HCT116 (cell line): ENCODE measurements at regions of chr13 and their contacts with region 1.

Region 1: DNA sequence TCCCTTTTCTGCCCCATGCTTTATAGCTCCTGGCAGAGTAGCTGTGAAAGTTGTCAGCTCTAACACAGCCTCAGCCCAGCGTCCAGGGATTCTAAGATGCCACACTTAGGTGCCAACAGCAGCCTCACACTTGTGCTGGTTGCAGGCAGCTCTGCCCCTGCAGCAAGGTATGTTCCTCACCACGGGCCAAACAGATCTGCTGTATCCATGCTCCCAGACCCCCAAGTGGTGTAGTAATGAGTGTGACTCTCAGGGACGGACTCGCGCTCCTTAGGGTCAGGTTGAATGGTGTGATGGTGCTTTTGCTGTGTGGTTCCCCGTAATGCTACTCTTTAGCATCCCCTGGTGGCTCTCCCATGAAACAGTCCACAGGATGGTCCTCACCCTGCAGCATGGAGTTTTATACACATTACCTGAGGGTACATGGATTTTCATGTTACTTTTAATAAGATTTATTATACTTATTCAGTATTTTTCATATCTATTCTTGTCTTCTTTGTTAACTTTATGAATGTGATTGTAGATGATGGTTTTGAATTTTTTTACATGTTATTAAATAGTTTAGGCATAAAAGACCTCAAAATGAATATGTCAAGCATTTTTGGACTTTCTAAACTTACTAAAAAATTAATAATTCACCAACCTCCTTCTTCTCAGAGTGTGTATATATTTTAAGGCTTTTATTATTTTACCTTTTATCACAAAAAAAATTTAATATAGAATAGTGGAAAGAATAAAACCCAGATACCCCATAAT is 232.5 kb downstream of the SLC7A1 start:
- DNase-seq: peak; percentile 28
- ATAC-seq: peak; percentile 100
- H3K4me3 ChIP-seq: no peak overlapping the region
- H3K27ac ChIP-seq: no peak overlapping the region
- H3K4me1 ChIP-seq: no peaks in the 10 kb centered on the region
- H3K27me3 ChIP-seq: peaks cover 13% of the 10 kb centered on the region
- CTCF ChIP-seq: peak; percentile 39 to 95 (median 81); a peak in 5 of 6 replicates
- POLR2A ChIP-seq: no peak
- RAD21 ChIP-seq: peak; percentile 59

Region 2: DNA sequence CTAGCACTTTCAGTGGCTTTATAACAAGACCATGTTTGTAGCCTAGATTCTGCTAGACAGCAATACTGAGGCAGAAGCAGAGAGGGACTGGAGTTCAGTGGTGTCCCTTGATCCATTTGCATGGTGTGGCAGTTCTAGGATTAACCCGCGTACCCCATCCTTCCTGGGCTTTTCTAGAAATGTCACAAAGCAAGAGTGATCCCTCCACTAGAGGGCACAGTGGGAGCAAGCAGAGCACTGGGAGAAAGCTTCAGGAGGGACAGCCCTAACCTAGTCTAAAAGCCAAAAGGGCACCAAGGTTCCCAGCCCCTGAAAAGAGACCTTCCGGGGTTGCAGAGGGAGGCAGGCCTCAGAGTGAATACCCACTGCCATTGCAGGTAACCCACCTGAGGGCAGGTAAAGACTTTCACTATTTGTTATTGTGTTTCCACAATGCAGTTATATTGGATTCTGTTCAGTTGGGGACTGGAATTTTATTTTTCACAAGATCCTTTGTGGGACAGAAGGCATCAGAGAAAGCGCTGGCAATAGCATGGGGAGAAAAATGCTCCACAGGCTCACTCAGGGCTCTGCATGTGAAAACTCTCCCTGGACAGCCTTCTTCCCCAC is 1038.7 kb before region 1 on chr13:
- CTCF ChIA-PET with region 1: no interaction called
- POLR2A ChIA-PET with region 1: no interaction called
- RAD21 ChIA-PET with region 1: no interaction called
- intact Hi-C with region 1: loop called (anchors 10 kb)
- DNase-seq: peak; percentile 60
- ATAC-seq: peak; percentile 95
- H3K4me3 ChIP-seq: no peak overlapping the region
- H3K27ac ChIP-seq: no peak overlapping the region
- H3K4me1 ChIP-seq: no peaks in the 10 kb centered on the region
- H3K27me3 ChIP-seq: no peaks in the 10 kb centered on the region
- CTCF ChIP-seq: peak; percentile 57 to 86 (median 81); a peak in 5 of 6 replicates
- POLR2A ChIP-seq: no peak
- RAD21 ChIP-seq: peak; percentile 79

Region 3: DNA sequence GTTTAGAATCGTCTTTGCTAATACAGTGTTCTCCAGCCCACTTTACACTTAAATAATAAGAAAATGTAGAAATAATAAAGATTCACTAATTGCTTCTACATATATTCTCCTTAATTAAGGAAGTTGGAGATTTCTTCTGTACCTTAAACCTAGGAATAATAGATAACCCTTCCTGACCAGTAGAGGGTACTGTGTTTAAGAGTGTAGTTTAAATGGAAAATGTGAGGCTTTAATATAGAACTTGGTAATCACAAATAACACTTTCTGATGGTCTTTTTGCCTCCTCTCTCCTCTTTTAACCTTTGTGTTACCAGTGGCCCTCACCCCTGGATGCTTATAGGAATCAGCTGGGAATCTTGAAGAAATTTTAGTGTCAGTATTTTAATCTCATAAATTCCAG is 683.4 kb before region 1 on chr13:
- CTCF ChIA-PET with region 1: no interaction called
- POLR2A ChIA-PET with region 1: no interaction called
- RAD21 ChIA-PET with region 1: no interaction called
- intact Hi-C with region 1: loop called (anchors 10 kb)
- DNase-seq: no peak
- ATAC-seq: peak; percentile 56; the same call in 1 of the 2 replicates
- H3K4me3 ChIP-seq: no peak overlapping the region
- H3K27ac ChIP-seq: no peak overlapping the region
- H3K4me1 ChIP-seq: peaks cover 0 to 5% of the 10 kb centered on the region in 2 experiments; a peak in 1 of 4 replicates
- H3K27me3 ChIP-seq: no peaks in the 10 kb centered on the region
- CTCF ChIP-seq: peak; percentile 12 to 53 (median 35); a peak in 5 of 6 replicates
- POLR2A ChIP-seq: no peak
- RAD21 ChIP-seq: peak; percentile 37; the same call in 1 of the 2 replicates